CD8-positive, alpha-beta T cell (primary cell): ENCODE measurements at regions of chr2 and their contacts with region 1.

Region 1: DNA sequence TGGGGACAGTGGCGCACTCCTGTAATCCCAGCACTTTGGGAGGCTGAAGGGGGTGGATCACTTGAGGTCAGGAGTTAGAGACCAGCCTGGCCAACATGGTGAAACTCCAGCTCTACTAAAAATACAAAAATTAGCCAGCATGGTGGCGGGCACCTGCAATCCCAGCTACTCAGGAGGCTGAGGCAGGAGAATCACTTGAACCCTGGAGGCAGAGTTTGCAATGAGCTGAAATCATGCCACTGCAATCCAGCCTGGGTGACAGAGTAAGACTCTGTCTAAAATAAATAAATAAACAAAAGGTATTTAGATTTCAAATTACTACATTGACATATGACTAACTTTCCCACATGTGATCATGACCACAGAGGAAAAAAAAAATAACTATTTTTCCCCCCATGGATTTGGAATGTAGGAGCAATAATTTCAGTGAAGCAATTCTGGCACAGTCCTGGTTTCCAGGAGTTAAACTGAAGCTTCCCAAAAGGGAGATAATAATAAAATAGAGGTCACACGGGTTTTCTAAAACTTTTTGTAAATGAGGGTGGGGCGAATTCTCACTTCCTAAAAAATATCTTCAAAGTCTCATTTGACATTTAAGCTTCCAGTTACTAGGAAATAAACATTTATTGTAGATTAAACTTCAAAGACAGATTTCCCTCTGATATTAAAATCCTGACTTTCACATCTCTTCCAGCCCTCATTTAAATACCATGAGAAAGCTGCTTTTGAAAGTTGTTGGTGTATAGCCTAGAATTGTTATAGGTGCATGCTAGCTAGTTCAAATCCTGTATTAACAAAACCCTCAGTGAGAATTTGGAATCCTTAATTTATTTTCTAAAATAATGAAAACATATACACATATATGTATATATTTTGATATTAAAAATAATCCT is 20.8 kb downstream of the SLC19A3 start:
- DNase-seq: no peak
- ATAC-seq: no peak
- H3K4me3 ChIP-seq: no peak overlapping the region
- H3K4me3 Mint-ChIP-seq: no peak overlapping the region
- H3K27ac ChIP-seq: no peak overlapping the region
- H3K27ac Mint-ChIP-seq: no peak overlapping the region
- H3K4me1 ChIP-seq: no peaks in the 10 kb centered on the region
- H3K4me1 Mint-ChIP-seq: no peaks in the 10 kb centered on the region
- H3K27me3 ChIP-seq: peaks cover 0 to 2% of the 10 kb centered on the region in 2 experiments
- H3K27me3 Mint-ChIP-seq: peaks cover 4% of the 10 kb centered on the region
- CTCF ChIP-seq: no peak

Region 2: GRCh38 chr2:227684276-227684675 is 12.8 kb before region 1 on chr2:
- CTCF ChIA-PET with region 1: no interaction called
- POLR2A ChIA-PET with region 1: no interaction called
- intact Hi-C with region 1: loop called in 1 of 2 experiments (anchors 1 kb)
- DNase-seq: no peak
- ATAC-seq: no peak
- H3K4me3 ChIP-seq: no peak overlapping the region
- H3K4me3 Mint-ChIP-seq: no peak overlapping the region
- H3K27ac ChIP-seq: no peak overlapping the region
- H3K27ac Mint-ChIP-seq: no peak overlapping the region
- H3K4me1 ChIP-seq: no peaks in the 10 kb centered on the region
- H3K4me1 Mint-ChIP-seq: no peaks in the 10 kb centered on the region
- H3K27me3 ChIP-seq: no peaks in the 10 kb centered on the region
- H3K27me3 Mint-ChIP-seq: peaks cover 19% of the 10 kb centered on the region
- CTCF ChIP-seq: no peak